ENCODE measurements at regions of chr5 and their contacts with region 1.

Region 1: DNA sequence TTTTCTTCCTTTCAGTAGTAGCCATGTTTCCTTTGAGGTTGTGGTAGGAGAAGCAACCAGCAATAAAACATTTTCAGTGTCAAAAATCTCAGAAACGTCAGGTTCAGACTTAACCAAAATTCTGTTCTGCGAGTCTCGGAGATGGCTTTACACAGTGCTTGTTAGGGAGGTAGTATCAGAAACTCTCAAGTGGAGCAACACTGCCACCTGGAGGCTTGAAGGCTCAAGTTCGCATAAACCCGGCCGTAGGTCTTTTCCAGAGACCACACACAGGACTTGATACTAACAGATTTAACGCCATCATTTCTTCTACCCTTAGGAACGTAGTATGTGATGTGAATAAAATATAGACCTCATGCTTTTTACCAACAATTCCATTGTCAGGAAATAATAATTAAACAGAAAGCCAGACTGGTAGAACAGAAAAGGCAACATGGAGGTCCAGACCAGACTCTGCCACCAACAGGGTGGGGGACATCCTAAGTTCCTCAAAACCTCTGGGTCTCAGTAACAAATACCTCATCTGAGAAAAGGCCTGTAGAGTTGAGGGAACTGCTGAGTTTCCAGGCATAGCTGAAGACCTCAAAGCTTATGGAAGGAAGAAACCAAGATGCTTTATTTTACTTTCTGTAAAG is 8.5 kb downstream of the PTGER4 start:
- DNase-seq: peak; percentile 88
- H3K4me3 ChIP-seq: peak overlapping the region in 4 of 8 donors; percentile 4 to 91 (median 44)
- H3K27ac ChIP-seq: peak overlapping the region in 6 of 8 donors; percentile 8 to 97 (median 90)
- H3K4me1 ChIP-seq: peaks cover 18 to 97% (median 72%) of the 10 kb centered on the region in 6 donors
- H3K27me3 ChIP-seq: no peaks in the 10 kb centered on the region
- CTCF ChIP-seq: peak; percentile 82 to 93 (median 87)
- POLR2A ChIP-seq: no peak

Region 2: GRCh38 chr5:39948867-39949468 is 739.3 kb before region 1 on chr5:
- intact Hi-C with region 1: loop called (anchors 5 kb)
- DNase-seq: no peak
- H3K4me3 ChIP-seq: no peak overlapping the region
- H3K27ac ChIP-seq: peak overlapping the region in 3 of 8 donors; percentile 71 to 82 (median 77)
- H3K4me1 ChIP-seq: peaks cover 0 to 13% (median 0%) of the 10 kb centered on the region in 6 donors
- H3K27me3 ChIP-seq: no peaks in the 10 kb centered on the region
- CTCF ChIP-seq: peak; percentile 49 to 80 (median 65)
- POLR2A ChIP-seq: no peak

Region 3: GRCh38 chr5:40021007-40021406 is 667.2 kb before region 1 on chr5:
- intact Hi-C with region 1: loop called (anchors 10 kb)
- DNase-seq: no peak
- H3K4me3 ChIP-seq: no peak overlapping the region
- H3K27ac ChIP-seq: no peak overlapping the region
- H3K4me1 ChIP-seq: no peaks in the 10 kb centered on the region
- H3K27me3 ChIP-seq: no peaks in the 10 kb centered on the region
- CTCF ChIP-seq: peak in 3 of 11 experiments; percentile 14 to 29 (median 17)
- POLR2A ChIP-seq: no peak

Region 4: DNA sequence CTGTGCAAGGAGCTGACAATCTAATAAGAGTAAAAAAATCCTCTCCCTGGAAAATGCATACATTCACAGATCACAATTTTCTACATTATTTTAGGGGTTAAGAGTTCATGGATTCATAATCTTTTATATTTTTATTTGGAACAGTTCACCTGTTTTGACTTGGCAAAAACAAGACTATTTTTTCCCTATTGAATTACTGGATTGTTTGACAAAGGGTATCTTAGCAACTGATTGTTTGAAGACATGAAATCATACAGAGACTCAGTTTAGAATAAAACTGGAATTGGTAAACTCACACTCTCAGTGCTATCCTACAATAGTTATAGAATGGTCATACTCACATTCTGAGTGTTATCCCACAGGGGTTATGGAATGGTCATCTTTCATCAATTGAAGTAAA is 366.7 kb before region 1 on chr5:
- intact Hi-C with region 1: no loop called
- DNase-seq: no peak
- H3K4me3 ChIP-seq: no peak overlapping the region
- H3K27ac ChIP-seq: no peak overlapping the region
- H3K4me1 ChIP-seq: peaks cover 0 to 9% (median 7%) of the 10 kb centered on the region in 6 donors
- H3K27me3 ChIP-seq: no peaks in the 10 kb centered on the region
- CTCF ChIP-seq: no peak
- POLR2A ChIP-seq: no peak

Region 5: DNA sequence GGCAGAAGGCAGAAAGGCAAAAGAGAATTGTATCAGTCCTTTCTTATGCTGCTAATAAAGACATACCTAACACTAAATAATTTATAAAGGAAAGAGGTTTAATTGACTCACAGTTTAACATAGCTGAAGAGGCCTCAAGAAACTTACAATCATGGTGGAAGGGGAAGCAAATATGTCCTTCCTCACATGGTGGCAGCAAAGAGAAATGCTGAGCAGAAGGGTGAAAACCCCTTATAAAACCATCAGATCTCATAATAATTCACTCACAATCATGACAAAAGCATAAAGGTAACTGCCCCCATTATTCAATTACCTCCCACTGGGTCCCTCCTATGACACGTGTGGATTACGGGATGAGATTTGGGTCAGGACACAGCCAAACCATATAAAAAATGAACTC is 321.0 kb before region 1 on chr5:
- intact Hi-C with region 1: loop called (anchors 10 kb)
- DNase-seq: no peak
- H3K4me3 ChIP-seq: no peak overlapping the region
- H3K27ac ChIP-seq: no peak overlapping the region
- H3K4me1 ChIP-seq: peaks cover 0 to 10% (median 0%) of the 10 kb centered on the region in 6 donors
- H3K27me3 ChIP-seq: no peaks in the 10 kb centered on the region
- CTCF ChIP-seq: peak in 4 of 11 experiments; percentile 11 to 42 (median 26)
- POLR2A ChIP-seq: no peak